ENCODE measurements at regions of chr11 and their contacts with region 1.

Region 1: DNA sequence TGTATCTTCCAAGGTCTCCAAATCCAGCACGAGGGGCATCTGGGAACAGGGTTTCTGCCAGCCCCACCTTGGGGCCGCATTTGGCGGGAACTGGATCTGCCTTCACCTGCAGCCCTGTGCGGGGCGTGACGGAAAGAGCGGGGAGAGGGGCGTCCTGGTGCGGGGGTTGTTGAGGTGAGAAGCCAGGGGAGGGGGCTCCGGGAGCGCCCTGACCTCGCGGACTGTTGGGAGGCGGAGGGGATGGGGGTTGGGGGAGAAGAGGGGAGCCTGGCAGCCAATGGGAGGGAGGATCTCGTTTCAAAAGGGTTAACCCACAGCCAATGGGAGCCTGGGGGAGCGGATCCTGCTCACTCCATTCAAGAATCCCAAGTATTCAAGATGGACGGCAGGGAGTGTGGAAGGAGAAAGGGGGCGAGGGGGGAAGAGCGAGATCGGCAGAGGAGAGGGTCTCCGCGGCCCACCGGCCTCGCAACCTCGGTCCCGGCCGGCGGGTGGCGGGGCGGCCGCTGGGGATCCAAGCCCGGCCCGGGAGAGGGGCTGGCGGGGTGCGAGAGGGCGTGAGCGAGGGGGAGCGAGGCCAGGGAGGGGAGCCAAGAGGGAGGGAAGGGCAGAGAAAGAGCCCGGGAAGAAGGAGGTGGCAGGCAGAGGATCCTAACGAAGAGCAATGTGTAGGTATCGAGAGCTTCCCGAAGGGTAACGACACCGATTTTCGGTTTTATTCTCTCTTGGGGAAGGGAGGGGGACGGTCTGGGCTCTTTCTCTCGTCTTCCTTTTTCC is 11.5 kb downstream of the YPEL4 start:
- DNase-seq: peak; percentile 44
- H3K4me3 ChIP-seq: peak overlapping the region; percentile 51 to 74 (median 58)
- H3K27ac ChIP-seq: peak overlapping the region; percentile 71 to 86 (median 80)
- H3K4me1 ChIP-seq: peaks cover 0 to 35% (median 21%) of the 10 kb centered on the region in 4 donors
- H3K27me3 ChIP-seq: peaks cover 41% of the 10 kb centered on the region
- CTCF ChIP-seq: no peak
- EP300 ChIP-seq: no peak
- POLR2A ChIP-seq: peak; percentile 12

Region 2: DNA sequence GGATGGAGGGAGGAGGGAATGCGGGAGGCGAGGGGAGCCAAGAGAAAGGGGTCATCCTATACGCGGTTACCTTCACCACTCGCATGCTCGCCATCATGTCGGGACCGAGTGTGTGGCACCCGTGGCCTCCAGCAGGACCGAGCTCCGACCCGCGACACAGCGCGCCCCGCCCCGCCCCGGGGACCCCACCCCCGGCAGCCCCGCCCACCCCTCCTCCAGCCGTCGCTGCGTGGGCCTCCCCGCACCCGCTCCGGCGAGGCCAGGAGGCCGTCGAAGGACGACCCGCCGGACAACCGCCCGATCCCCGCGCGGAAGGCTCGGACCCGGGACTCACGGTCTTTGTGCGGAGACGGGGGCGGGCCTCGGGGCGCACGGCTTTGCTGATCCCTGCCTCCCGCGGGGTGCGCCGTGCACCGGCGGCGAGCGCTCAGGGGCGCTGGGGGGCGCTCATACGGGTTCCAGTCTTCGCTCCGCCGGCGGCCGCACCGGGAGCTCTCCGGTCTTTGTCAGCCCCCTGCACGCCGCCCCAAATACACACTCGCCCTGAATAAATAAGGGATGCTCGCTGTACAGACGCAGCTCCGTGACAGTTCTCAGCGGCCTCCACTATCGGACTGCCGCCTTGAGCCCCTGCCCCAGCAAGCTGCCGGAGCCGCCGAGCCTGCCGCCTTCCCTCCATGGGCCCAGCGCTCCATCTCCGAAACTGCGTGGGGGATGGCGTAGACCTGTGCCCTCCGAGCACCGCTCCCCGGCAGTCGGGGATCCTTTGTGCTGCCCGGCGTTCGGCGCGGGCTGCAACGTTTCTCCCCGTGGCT is 70.5 kb before region 1 on chr11 and contains the start of gene UBE2L6:
- in situ Hi-C with region 1: loop called in 3 of 4 experiments (anchors 5 to 10 kb)
- intact Hi-C with region 1: loop called (anchors 1 kb)
- DNase-seq: peak; percentile 87
- H3K4me3 ChIP-seq: peak within 1 kb of the TSS; percentile 70 to 81 (median 76)
- H3K27ac ChIP-seq: peak within 1 kb of the TSS; percentile 82 to 90 (median 88)
- H3K4me1 ChIP-seq: peaks cover 10 to 27% (median 16%) of the 10 kb centered on the region in 4 donors
- H3K27me3 ChIP-seq: no peaks in the 10 kb centered on the region
- CTCF ChIP-seq: no peak
- EP300 ChIP-seq: no peak
- POLR2A ChIP-seq: no peak
- total RNA-seq, gene UBE2L6: 15.3 to 24.3 (median 20.6) TPM

Region 3: GRCh38 chr11:57668436-57668787 is 30.2 kb after region 1 on chr11:
- in situ Hi-C with region 1: no loop called
- intact Hi-C with region 1: no loop called
- DNase-seq: peak; percentile 40
- H3K4me3 ChIP-seq: peak overlapping the region; percentile 67 to 96 (median 83)
- H3K27ac ChIP-seq: peak overlapping the region; percentile 94 to 99 (median 98)
- H3K4me1 ChIP-seq: peaks cover 11 to 25% (median 22%) of the 10 kb centered on the region in 4 donors
- H3K27me3 ChIP-seq: no peaks in the 10 kb centered on the region
- CTCF ChIP-seq: no peak
- EP300 ChIP-seq: no peak
- POLR2A ChIP-seq: no peak

Region 4: DNA sequence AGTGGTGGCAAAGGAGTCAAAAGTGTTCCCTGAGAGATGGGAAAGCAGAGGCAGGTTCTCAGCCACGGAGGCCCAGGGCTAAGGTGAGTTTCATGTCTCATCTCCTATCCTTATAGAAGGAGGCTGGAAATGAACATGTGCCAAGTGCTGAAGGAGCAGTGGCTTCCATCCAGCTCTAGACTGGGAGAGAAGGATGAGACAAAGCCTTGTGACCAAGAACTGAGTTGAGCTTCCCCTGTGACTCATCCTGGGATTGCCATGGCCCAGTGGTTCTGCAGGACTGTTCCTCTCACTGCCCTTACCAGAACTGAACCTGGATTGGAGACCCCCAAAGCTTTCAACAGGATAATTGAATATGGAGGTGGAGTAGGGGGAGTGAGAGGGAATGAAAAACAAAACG is 368.7 kb after region 1 on chr11:
- in situ Hi-C with region 1: no loop called
- intact Hi-C with region 1: no loop called
- DNase-seq: no peak
- H3K4me3 ChIP-seq: no peak overlapping the region
- H3K27ac ChIP-seq: no peak overlapping the region
- H3K4me1 ChIP-seq: no peaks in the 10 kb centered on the region
- H3K27me3 ChIP-seq: no peaks in the 10 kb centered on the region
- CTCF ChIP-seq: no peak
- EP300 ChIP-seq: no peak
- POLR2A ChIP-seq: no peak

Measured in transverse colon (tissue), 4 donors.